AG04449 (cell line): ENCODE measurements at regions of chr9 and their contacts with region 1.

Region 1: GRCh38 chr9:76996700-76997099 is 22.8 kb upstream of the FOXB2 start:
- DNase-seq: no peak
- H3K4me3 ChIP-seq: no peak overlapping the region
- CTCF ChIP-seq: peak; percentile 80

Region 2: GRCh38 chr9:76475686-76476085 is 521.0 kb before region 1 on chr9:
- CTCF ChIA-PET with region 1: no interaction called
- POLR2A ChIA-PET with region 1: no interaction called
- DNase-seq: no peak
- H3K4me3 ChIP-seq: no peak overlapping the region
- CTCF ChIP-seq: no peak

Region 3: GRCh38 chr9:76756268-76756640 is 240.4 kb before region 1 on chr9:
- CTCF ChIA-PET with region 1: interaction called, 26 read pairs
- POLR2A ChIA-PET with region 1: no interaction called
- DNase-seq: no peak
- H3K4me3 ChIP-seq: no peak overlapping the region
- CTCF ChIP-seq: peak; percentile 22

Region 4: GRCh38 chr9:76761448-76761847 is 235.3 kb before region 1 on chr9:
- CTCF ChIA-PET with region 1: interaction called, 26 read pairs
- POLR2A ChIA-PET with region 1: no interaction called
- DNase-seq: no peak
- H3K4me3 ChIP-seq: no peak overlapping the region
- CTCF ChIP-seq: peak; percentile 11